Activated CD4-positive, alpha-beta T cell treated with anti-CD3 and anti-CD28 coated beads, Interleukin-2, amount 10 ng/mL, durations not matched to agents 24 days and 14 days (primary cell): ENCODE measurements at regions of chr14 and their contacts with region 1.

Region 1: GRCh38 chr14:60248697-60249318 is at the start of gene PPM1A:
- DNase-seq: peak; percentile 97
- H3K4me3 Mint-ChIP-seq: peak within 1 kb of the TSS; percentile 93
- H3K27ac Mint-ChIP-seq: peak within 1 kb of the TSS; percentile 100
- H3K4me1 Mint-ChIP-seq: peaks cover 47% of the 10 kb centered on the region
- H3K27me3 Mint-ChIP-seq: no peaks in the 10 kb centered on the region
- total RNA-seq, gene PPM1A: 42.9 and 43.9 TPM in 2 replicates

Region 2: GRCh38 chr14:59483900-59484638 is 764.7 kb before region 1 on chr14 and contains the starts of genes JKAMP and L3HYPDH:
- intact Hi-C with region 1: loop called (anchors 10 kb)
- DNase-seq: peak; percentile 99
- H3K4me3 Mint-ChIP-seq: peak within 1 kb of the TSS; percentile 96
- H3K27ac Mint-ChIP-seq: peak within 1 kb of the TSS; percentile 93
- H3K4me1 Mint-ChIP-seq: peaks cover 53% of the 10 kb centered on the region
- H3K27me3 Mint-ChIP-seq: no peaks in the 10 kb centered on the region
- total RNA-seq, gene JKAMP: 27.9 and 28.6 TPM in 2 replicates
- total RNA-seq, gene L3HYPDH: 20.8 TPM in 2 replicates

Region 3: DNA sequence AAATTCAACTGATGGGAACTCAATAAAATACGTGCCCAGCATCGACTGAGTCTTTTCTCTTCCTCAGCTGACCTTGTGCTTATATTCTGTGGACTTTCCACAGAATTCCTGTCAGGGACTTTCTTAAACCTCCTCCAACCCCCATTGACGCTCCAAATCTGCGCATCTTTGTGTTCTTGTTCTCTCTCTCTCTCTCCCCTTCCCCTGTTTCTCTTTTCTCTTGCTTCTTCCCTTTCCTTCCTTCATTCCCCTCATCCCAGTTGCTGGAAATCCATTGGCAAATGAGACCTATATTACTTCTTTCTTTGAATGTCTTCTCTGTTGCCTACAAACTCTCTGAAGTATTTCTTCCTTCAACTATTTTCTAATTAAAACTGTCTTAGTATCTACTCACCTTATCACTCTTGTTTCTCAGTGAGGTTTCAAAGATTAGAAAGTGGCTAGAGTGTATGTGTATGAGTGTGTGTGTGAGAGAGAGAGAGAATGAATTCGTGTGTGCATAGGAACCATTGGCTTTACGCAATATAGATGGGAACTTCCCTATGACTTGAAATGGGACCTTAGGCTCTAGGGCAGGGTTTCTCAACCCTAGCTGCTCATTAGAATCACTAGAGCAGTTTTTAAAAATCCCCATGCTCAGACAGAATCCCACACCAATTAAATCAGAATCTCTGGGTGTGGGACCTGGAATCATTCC is 41.8 kb before region 1 on chr14:
- intact Hi-C with region 1: loop called (anchors 2 kb)
- DNase-seq: no peak
- H3K4me3 Mint-ChIP-seq: no peak overlapping the region
- H3K27ac Mint-ChIP-seq: no peak overlapping the region
- H3K4me1 Mint-ChIP-seq: peaks cover 13% of the 10 kb centered on the region
- H3K27me3 Mint-ChIP-seq: peaks cover 22% of the 10 kb centered on the region

Region 4: GRCh38 chr14:60235440-60235839 is 13.4 kb before region 1 on chr14:
- intact Hi-C with region 1: no loop called
- DNase-seq: no peak
- H3K4me3 Mint-ChIP-seq: no peak overlapping the region
- H3K27ac Mint-ChIP-seq: no peak overlapping the region
- H3K4me1 Mint-ChIP-seq: no peaks in the 10 kb centered on the region
- H3K27me3 Mint-ChIP-seq: peaks cover 21% of the 10 kb centered on the region

Region 5: DNA sequence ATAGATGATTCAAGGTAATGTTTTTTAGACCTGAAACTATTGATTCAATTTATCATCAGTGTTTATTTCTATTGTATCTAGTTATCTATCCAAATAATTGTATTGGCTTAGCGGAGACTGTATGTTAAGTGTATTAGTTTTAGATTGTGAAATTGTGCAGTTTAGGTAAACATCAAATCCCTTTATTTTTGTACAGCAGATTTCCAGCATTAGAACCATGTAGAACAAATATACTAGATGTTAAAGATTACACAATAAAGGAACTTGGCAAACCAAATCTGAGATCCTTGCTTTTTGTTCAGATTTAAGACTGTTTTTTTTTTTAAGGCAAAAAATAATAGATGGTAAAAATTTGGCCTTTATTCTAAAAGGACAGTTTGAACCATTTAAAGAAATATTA is 39.5 kb after region 1 on chr14:
- intact Hi-C with region 1: loop called (anchors 5 kb)
- DNase-seq: no peak
- H3K4me3 Mint-ChIP-seq: no peak overlapping the region
- H3K27ac Mint-ChIP-seq: no peak overlapping the region
- H3K4me1 Mint-ChIP-seq: no peaks in the 10 kb centered on the region
- H3K27me3 Mint-ChIP-seq: no peaks in the 10 kb centered on the region

Region 6: GRCh38 chr14:60980811-60981632 is 732.2 kb after region 1 on chr14 and contains the starts of genes SLC38A6 and TRMT5:
- intact Hi-C with region 1: loop called (anchors 5 kb)
- DNase-seq: peak; percentile 98
- H3K4me3 Mint-ChIP-seq: no peak within 1 kb of the TSS
- H3K27ac Mint-ChIP-seq: no peak within 1 kb of the TSS
- H3K4me1 Mint-ChIP-seq: peaks cover 21% of the 10 kb centered on the region
- H3K27me3 Mint-ChIP-seq: no peaks in the 10 kb centered on the region
- total RNA-seq, gene SLC38A6: 4.7 and 5.9 TPM in 2 replicates
- total RNA-seq, gene TRMT5: 16.1 and 18.0 TPM in 2 replicates